CD4-positive, alpha-beta memory T cell (primary cell): ENCODE measurements at regions of chr3 and their contacts with region 1.

Region 1: GRCh38 chr3:153221748-153222162 is 59.7 kb downstream of the RAP2B start:
- DNase-seq: peak; percentile 86 to 95 (median 90)
- H3K4me3 ChIP-seq: peak overlapping the region; percentile 12 to 23
- H3K4me3 Mint-ChIP-seq: peak overlapping the region; percentile 41 to 86 (median 76)
- H3K27ac ChIP-seq: peak overlapping the region; percentile 67
- H3K27ac Mint-ChIP-seq: peak overlapping the region; percentile 90 to 99 (median 98)
- H3K4me1 ChIP-seq: peaks cover 84% of the 10 kb centered on the region
- H3K4me1 Mint-ChIP-seq: peaks cover 50 to 72% (median 60%) of the 10 kb centered on the region in 4 donors
- H3K27me3 ChIP-seq: no peaks in the 10 kb centered on the region
- H3K27me3 Mint-ChIP-seq: no peaks in the 10 kb centered on the region

Region 2: GRCh38 chr3:153173758-153174516 is 47.8 kb before region 1 on chr3:
- CTCF ChIA-PET with region 1: no interaction called
- POLR2A ChIA-PET with region 1: interaction called, 16 read pairs
- intact Hi-C with region 1: no loop called
- DNase-seq: no peak
- H3K4me3 ChIP-seq: no peak overlapping the region
- H3K4me3 Mint-ChIP-seq: no peak overlapping the region
- H3K27ac ChIP-seq: no peak overlapping the region
- H3K27ac Mint-ChIP-seq: peak overlapping the region; percentile 17 to 83 (median 68)
- H3K4me1 ChIP-seq: peaks cover 17% of the 10 kb centered on the region
- H3K4me1 Mint-ChIP-seq: peaks cover 17 to 48% (median 38%) of the 10 kb centered on the region in 4 donors
- H3K27me3 ChIP-seq: no peaks in the 10 kb centered on the region
- H3K27me3 Mint-ChIP-seq: no peaks in the 10 kb centered on the region

Region 3: GRCh38 chr3:153209596-153209995 is 12.2 kb before region 1 on chr3:
- CTCF ChIA-PET with region 1: interaction called, 53 read pairs
- POLR2A ChIA-PET with region 1: interaction called, 38 read pairs
- intact Hi-C with region 1: loop called (anchors 1 kb)
- DNase-seq: no peak
- H3K4me3 ChIP-seq: no peak overlapping the region
- H3K4me3 Mint-ChIP-seq: peak overlapping the region in 6 of 8 donors; percentile 59 to 80 (median 72)
- H3K27ac ChIP-seq: no peak overlapping the region
- H3K27ac Mint-ChIP-seq: peak overlapping the region in 5 of 7 donors; percentile 54 to 85 (median 72)
- H3K4me1 ChIP-seq: peaks cover 20% of the 10 kb centered on the region
- H3K4me1 Mint-ChIP-seq: peaks cover 26 to 42% (median 33%) of the 10 kb centered on the region in 4 donors
- H3K27me3 ChIP-seq: no peaks in the 10 kb centered on the region
- H3K27me3 Mint-ChIP-seq: no peaks in the 10 kb centered on the region

Region 4: DNA sequence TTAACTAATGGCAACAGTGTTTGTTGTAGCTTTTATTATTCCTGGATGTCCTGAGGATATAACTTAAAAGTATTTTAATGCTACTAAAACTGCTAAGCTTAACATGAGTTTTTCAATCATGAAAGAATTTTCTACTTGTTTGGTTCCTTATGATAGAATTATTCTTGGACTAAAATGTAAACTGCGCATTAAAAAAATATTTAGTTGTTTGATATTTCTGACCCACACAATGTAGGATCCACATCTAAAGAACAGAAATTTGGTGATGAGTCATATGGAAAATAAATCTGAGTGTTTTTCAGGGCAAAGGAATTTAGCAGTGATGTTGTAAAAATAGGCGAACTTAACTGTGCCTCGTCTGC is 11.1 kb after region 1 on chr3:
- CTCF ChIA-PET with region 1: interaction called, 13 read pairs
- POLR2A ChIA-PET with region 1: interaction called, 9 read pairs
- intact Hi-C with region 1: no loop called
- DNase-seq: no peak
- H3K4me3 ChIP-seq: no peak overlapping the region
- H3K4me3 Mint-ChIP-seq: no peak overlapping the region
- H3K27ac ChIP-seq: no peak overlapping the region
- H3K27ac Mint-ChIP-seq: no peak overlapping the region
- H3K4me1 ChIP-seq: peaks cover 9% of the 10 kb centered on the region
- H3K4me1 Mint-ChIP-seq: peaks cover 7 to 15% (median 10%) of the 10 kb centered on the region in 4 donors
- H3K27me3 ChIP-seq: no peaks in the 10 kb centered on the region
- H3K27me3 Mint-ChIP-seq: no peaks in the 10 kb centered on the region

Region 5: GRCh38 chr3:153246806-153247205 is 25.1 kb after region 1 on chr3:
- CTCF ChIA-PET with region 1: interaction called, 3 read pairs
- POLR2A ChIA-PET with region 1: interaction called, 24 read pairs
- intact Hi-C with region 1: no loop called
- DNase-seq: no peak
- H3K4me3 ChIP-seq: no peak overlapping the region
- H3K4me3 Mint-ChIP-seq: no peak overlapping the region
- H3K27ac ChIP-seq: no peak overlapping the region
- H3K27ac Mint-ChIP-seq: no peak overlapping the region
- H3K4me1 ChIP-seq: peaks cover 12% of the 10 kb centered on the region
- H3K4me1 Mint-ChIP-seq: peaks cover 19 to 46% (median 32%) of the 10 kb centered on the region in 4 donors
- H3K27me3 ChIP-seq: no peaks in the 10 kb centered on the region
- H3K27me3 Mint-ChIP-seq: no peaks in the 10 kb centered on the region

Region 6: DNA sequence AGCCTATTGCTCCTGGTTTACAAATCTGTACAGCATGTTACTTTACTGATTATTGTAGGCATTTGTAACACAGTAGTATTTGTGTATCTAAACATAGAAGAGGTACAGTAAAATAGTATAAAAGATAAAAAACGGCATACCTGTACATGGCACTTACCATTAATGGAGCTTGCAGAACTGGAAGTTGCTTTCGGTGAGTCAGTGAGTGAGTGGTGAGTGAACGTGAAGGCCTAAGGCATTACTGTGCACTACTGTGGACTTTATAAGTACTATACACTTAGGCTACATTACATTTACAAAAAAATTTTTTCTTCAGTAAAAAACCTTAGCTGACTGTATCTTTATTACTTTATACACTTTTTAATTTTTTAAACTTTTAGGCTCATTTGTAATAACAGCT is 31.2 kb after region 1 on chr3:
- CTCF ChIA-PET with region 1: interaction called, 3 read pairs
- POLR2A ChIA-PET with region 1: interaction called, 24 read pairs
- intact Hi-C with region 1: loop called (anchors 5 kb)
- DNase-seq: no peak
- H3K4me3 ChIP-seq: no peak overlapping the region
- H3K4me3 Mint-ChIP-seq: no peak overlapping the region
- H3K27ac ChIP-seq: no peak overlapping the region
- H3K27ac Mint-ChIP-seq: no peak overlapping the region
- H3K4me1 ChIP-seq: peaks cover 9% of the 10 kb centered on the region
- H3K4me1 Mint-ChIP-seq: peaks cover 16 to 39% (median 29%) of the 10 kb centered on the region in 4 donors
- H3K27me3 ChIP-seq: no peaks in the 10 kb centered on the region
- H3K27me3 Mint-ChIP-seq: no peaks in the 10 kb centered on the region

Region 7: GRCh38 chr3:153284282-153284938 is 62.7 kb after region 1 on chr3:
- CTCF ChIA-PET with region 1: interaction called, 8 read pairs
- POLR2A ChIA-PET with region 1: interaction called, 43 read pairs
- intact Hi-C with region 1: loop called (anchors 1 kb)
- DNase-seq: peak; percentile 42 to 59 (median 50)
- H3K4me3 ChIP-seq: no peak overlapping the region
- H3K4me3 Mint-ChIP-seq: peak overlapping the region in 7 of 8 donors; percentile 57 to 81 (median 65)
- H3K27ac ChIP-seq: peak overlapping the region; percentile 20
- H3K27ac Mint-ChIP-seq: peak overlapping the region; percentile 74 to 97 (median 91)
- H3K4me1 ChIP-seq: peaks cover 51% of the 10 kb centered on the region
- H3K4me1 Mint-ChIP-seq: peaks cover 34 to 49% (median 43%) of the 10 kb centered on the region in 4 donors
- H3K27me3 ChIP-seq: no peaks in the 10 kb centered on the region
- H3K27me3 Mint-ChIP-seq: no peaks in the 10 kb centered on the region

Region 8: GRCh38 chr3:153338487-153338886 is 116.7 kb after region 1 on chr3:
- CTCF ChIA-PET with region 1: no interaction called
- POLR2A ChIA-PET with region 1: no interaction called
- intact Hi-C with region 1: no loop called
- DNase-seq: no peak
- H3K4me3 ChIP-seq: no peak overlapping the region
- H3K4me3 Mint-ChIP-seq: no peak overlapping the region
- H3K27ac ChIP-seq: no peak overlapping the region
- H3K27ac Mint-ChIP-seq: no peak overlapping the region
- H3K4me1 ChIP-seq: no peaks in the 10 kb centered on the region
- H3K4me1 Mint-ChIP-seq: no peaks in the 10 kb centered on the region
- H3K27me3 ChIP-seq: no peaks in the 10 kb centered on the region
- H3K27me3 Mint-ChIP-seq: no peaks in the 10 kb centered on the region